GM12878 (cell line): ENCODE measurements at regions of chr3 and their contacts with region 1.

Region 1: GRCh38 chr3:128123538-128124368 is at the start of gene RUVBL1:
- DNase-seq: peak; percentile 91
- ATAC-seq: peak; percentile 100
- H3K4me3 ChIP-seq: peak within 1 kb of the TSS; percentile 91
- H3K27ac ChIP-seq: peak within 1 kb of the TSS; percentile 24
- H3K4me1 ChIP-seq: peaks cover 6% of the 10 kb centered on the region
- H3K27me3 ChIP-seq: no peaks in the 10 kb centered on the region
- CTCF ChIP-seq: no peak
- EP300 ChIP-seq: peak in 1 of 2 experiments; percentile 40; a peak in 1 of 4 replicates
- POLR2A ChIP-seq: peak; percentile 66
- RAD21 ChIP-seq: no peak
- polyA plus RNA-seq, gene RUVBL1: 15.2 to 32.5 TPM

Region 2: GRCh38 chr3:128153156-128154041 is 29.6 kb after region 1 on chr3 and contains the start of gene EEFSEC:
- CTCF ChIA-PET with region 1: interaction called, 4 read pairs
- POLR2A ChIA-PET with region 1: interaction called, 8 read pairs
- RAD21 ChIA-PET with region 1: interaction called, 6 read pairs
- SMC1A ChIA-PET with region 1: interaction called, 8 read pairs
- in situ Hi-C with region 1: no loop called
- intact Hi-C with region 1: loop called (anchors 1 kb)
- DNase-seq: peak; percentile 57
- ATAC-seq: peak; percentile 96
- H3K4me3 ChIP-seq: peak within 1 kb of the TSS; percentile 66
- H3K27ac ChIP-seq: peak within 1 kb of the TSS; percentile 69
- H3K4me1 ChIP-seq: peaks cover 3% of the 10 kb centered on the region; the same call in 1 of the 2 replicates
- H3K27me3 ChIP-seq: no peaks in the 10 kb centered on the region
- CTCF ChIP-seq: no peak
- EP300 ChIP-seq: no peak
- POLR2A ChIP-seq: peak; percentile 96
- RAD21 ChIP-seq: no peak
- polyA plus RNA-seq, gene EEFSEC: 0.29 to 1.4 TPM

Region 3: GRCh38 chr3:128505771-128506170 is 382.0 kb after region 1 on chr3:
- CTCF ChIA-PET with region 1: no interaction called
- POLR2A ChIA-PET with region 1: no interaction called
- RAD21 ChIA-PET with region 1: no interaction called
- SMC1A ChIA-PET with region 1: no interaction called
- in situ Hi-C with region 1: no loop called
- intact Hi-C with region 1: no loop called
- DNase-seq: no peak
- ATAC-seq: no peak
- H3K4me3 ChIP-seq: no peak overlapping the region
- H3K27ac ChIP-seq: no peak overlapping the region
- H3K4me1 ChIP-seq: no peaks in the 10 kb centered on the region
- H3K27me3 ChIP-seq: no peaks in the 10 kb centered on the region; a peak in 1 of 4 replicates
- CTCF ChIP-seq: no peak
- EP300 ChIP-seq: no peak
- POLR2A ChIP-seq: no peak
- RAD21 ChIP-seq: no peak